HepG2 (cell line): ENCODE measurements at regions of chr14 and their contacts with region 1.

Region 1: GRCh38 chr14:100306420-100307219 is at the start of gene SLC25A29:
- DNase-seq: peak; percentile 70
- ATAC-seq: peak; percentile 79
- H3K4me3 ChIP-seq: peak within 1 kb of the TSS; percentile 73 to 87 (median 81)
- H3K27ac ChIP-seq: peak within 1 kb of the TSS; percentile 54
- H3K4me1 ChIP-seq: peaks cover 52% of the 10 kb centered on the region
- H3K27me3 ChIP-seq: peaks cover 0 to 9% of the 10 kb centered on the region in 2 experiments; a peak in 4 of 5 replicates
- CTCF ChIP-seq: peak; percentile 9; the same call in 1 of the 2 replicates
- EP300 ChIP-seq: no peak
- POLR2A ChIP-seq: peak; percentile 28 to 82; a peak in 2 of 4 replicates
- RAD21 ChIP-seq: no peak
- total RNA-seq, gene SLC25A29: 9.6 and 17.2 TPM in 2 replicates

Region 2: GRCh38 chr14:100285021-100285912 is 21.4 kb before region 1 on chr14:
- CTCF ChIA-PET with region 1: no interaction called
- POLR2A ChIA-PET with region 1: interaction called, 7 read pairs
- in situ Hi-C with region 1: no loop called
- intact Hi-C with region 1: loop called (anchors 2 kb)
- DNase-seq: peak; percentile 40
- ATAC-seq: peak; percentile 74
- H3K4me3 ChIP-seq: peak overlapping the region; percentile 59 to 77 (median 75)
- H3K27ac ChIP-seq: peak overlapping the region; percentile 84
- H3K4me1 ChIP-seq: peaks cover 62% of the 10 kb centered on the region
- H3K27me3 ChIP-seq: no peaks in the 10 kb centered on the region
- CTCF ChIP-seq: peak; percentile 81
- EP300 ChIP-seq: no peak
- POLR2A ChIP-seq: peak; percentile 49 to 62
- RAD21 ChIP-seq: peak; percentile 83

Region 3: GRCh38 chr14:100321473-100322137 is 15.0 kb after region 1 on chr14:
- CTCF ChIA-PET with region 1: interaction called, 3 read pairs
- POLR2A ChIA-PET with region 1: interaction called, 5 read pairs
- in situ Hi-C with region 1: no loop called
- intact Hi-C with region 1: loop called (anchors 2 kb)
- DNase-seq: no peak
- ATAC-seq: no peak
- H3K4me3 ChIP-seq: peak overlapping the region in 1 of 3 experiments; percentile 52; a peak in 1 of 6 replicates
- H3K27ac ChIP-seq: no peak overlapping the region
- H3K4me1 ChIP-seq: peaks cover 83% of the 10 kb centered on the region
- H3K27me3 ChIP-seq: peaks cover 0 to 2% of the 10 kb centered on the region in 2 experiments; a peak in 1 of 5 replicates
- CTCF ChIP-seq: no peak
- EP300 ChIP-seq: no peak
- POLR2A ChIP-seq: no peak
- RAD21 ChIP-seq: no peak